HepG2 (cell line): ENCODE measurements at regions of chr14 and their contacts with region 1.

Region 1: GRCh38 chr14:63632932-63633514 is 8.6 kb downstream of the WDR89 start:
- DNase-seq: peak; percentile 9
- ATAC-seq: peak; percentile 56; the same call in 2 of the 3 replicates
- H3K4me3 ChIP-seq: no peak overlapping the region
- H3K27ac ChIP-seq: no peak overlapping the region
- H3K4me1 ChIP-seq: 0 out of 2 replicates have a peak, but pooled peaks cover 3% of the 10 kb centered on the region
- H3K27me3 ChIP-seq: no peaks in the 10 kb centered on the region
- CTCF ChIP-seq: peak; percentile 39
- EP300 ChIP-seq: no peak
- POLR2A ChIP-seq: no peak
- RAD21 ChIP-seq: no peak

Region 2: GRCh38 chr14:63770187-63770807 is 137.3 kb after region 1 on chr14:
- CTCF ChIA-PET with region 1: interaction called, 4 read pairs
- POLR2A ChIA-PET with region 1: no interaction called
- in situ Hi-C with region 1: no loop called
- intact Hi-C with region 1: loop called (anchors 1 kb)
- DNase-seq: peak; percentile 57
- ATAC-seq: peak; percentile 91
- H3K4me3 ChIP-seq: no peak overlapping the region
- H3K27ac ChIP-seq: no peak overlapping the region
- H3K4me1 ChIP-seq: peaks cover 22% of the 10 kb centered on the region
- H3K27me3 ChIP-seq: no peaks in the 10 kb centered on the region
- CTCF ChIP-seq: peak; percentile 68
- EP300 ChIP-seq: no peak
- POLR2A ChIP-seq: no peak
- RAD21 ChIP-seq: peak; percentile 42; the same call in 1 of the 2 replicates